Caco-2 (cell line): ENCODE measurements at regions of chr1 and their contacts with region 1.

Region 1: DNA sequence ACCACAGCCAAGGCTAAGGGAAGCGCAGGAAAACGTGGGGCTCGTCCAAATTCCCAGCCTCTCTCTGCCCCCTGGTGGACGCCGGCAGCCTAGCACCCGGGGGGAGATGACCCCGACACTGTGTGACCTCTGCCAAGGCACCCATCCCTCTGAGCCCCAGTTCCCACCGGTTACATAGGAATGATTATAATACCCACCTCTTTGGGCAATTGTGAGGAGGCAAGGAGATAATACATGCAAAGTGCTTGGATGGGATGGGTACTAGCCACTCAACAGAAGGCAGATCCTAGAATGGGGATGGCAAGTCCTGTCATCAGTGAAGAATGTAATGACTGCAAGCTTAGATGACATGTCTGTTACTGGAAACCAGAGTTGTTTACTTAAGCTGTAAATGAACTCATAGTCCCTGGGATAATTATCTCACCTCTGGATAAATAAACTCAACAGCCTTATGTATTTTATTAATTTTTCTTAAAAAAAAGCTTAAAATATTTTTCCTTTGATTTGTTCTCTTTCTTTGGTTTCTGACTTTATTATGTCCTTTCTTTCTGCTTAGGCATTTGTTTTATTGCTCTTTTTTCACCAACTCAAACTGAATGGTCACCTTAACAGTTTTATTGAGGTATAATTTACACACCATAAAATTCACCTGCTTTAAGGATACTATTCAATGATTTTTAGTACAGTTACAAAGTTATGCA is 11.3 kb upstream of the BMP8B start:
- DNase-seq: peak; percentile 75 to 86
- H3K4me3 ChIP-seq: peak overlapping the region; percentile 25
- H3K4me3 Mint-ChIP-seq: peak overlapping the region; percentile 70
- H3K27ac Mint-ChIP-seq: peak overlapping the region; percentile 86
- H3K4me1 ChIP-seq: peaks cover 16% of the 10 kb centered on the region
- H3K4me1 Mint-ChIP-seq: no peaks in the 10 kb centered on the region
- H3K27me3 ChIP-seq: no peaks in the 10 kb centered on the region
- H3K27me3 Mint-ChIP-seq: no peaks in the 10 kb centered on the region
- CTCF ChIP-seq: peak; percentile 65 to 78

Region 2: GRCh38 chr1:39701049-39701439 is 98.9 kb before region 1 on chr1:
- CTCF ChIA-PET with region 1: interaction called, 8 read pairs
- POLR2A ChIA-PET with region 1: no interaction called
- intact Hi-C with region 1: loop called (anchors 1 kb)
- DNase-seq: no peak
- H3K4me3 ChIP-seq: no peak overlapping the region
- H3K4me3 Mint-ChIP-seq: no peak overlapping the region
- H3K27ac Mint-ChIP-seq: no peak overlapping the region
- H3K4me1 ChIP-seq: no peaks in the 10 kb centered on the region
- H3K4me1 Mint-ChIP-seq: peaks cover 13% of the 10 kb centered on the region
- H3K27me3 ChIP-seq: no peaks in the 10 kb centered on the region
- H3K27me3 Mint-ChIP-seq: peaks cover 9% of the 10 kb centered on the region
- CTCF ChIP-seq: no peak